Activated T-helper 2 cell treated with anti-CD3 and anti-CD28 coated beads, Interferon-gamma antibody, Interleukin-2, Interleukin-4, amounts not matched to agents 10 μg/mL and 5 μg/mL and 100 μg/mL, durations not matched to agents 14 hours and 24 hours and 36 hours (primary cell): ENCODE measurements at regions of chr15 and their contacts with region 1.

Region 1: DNA sequence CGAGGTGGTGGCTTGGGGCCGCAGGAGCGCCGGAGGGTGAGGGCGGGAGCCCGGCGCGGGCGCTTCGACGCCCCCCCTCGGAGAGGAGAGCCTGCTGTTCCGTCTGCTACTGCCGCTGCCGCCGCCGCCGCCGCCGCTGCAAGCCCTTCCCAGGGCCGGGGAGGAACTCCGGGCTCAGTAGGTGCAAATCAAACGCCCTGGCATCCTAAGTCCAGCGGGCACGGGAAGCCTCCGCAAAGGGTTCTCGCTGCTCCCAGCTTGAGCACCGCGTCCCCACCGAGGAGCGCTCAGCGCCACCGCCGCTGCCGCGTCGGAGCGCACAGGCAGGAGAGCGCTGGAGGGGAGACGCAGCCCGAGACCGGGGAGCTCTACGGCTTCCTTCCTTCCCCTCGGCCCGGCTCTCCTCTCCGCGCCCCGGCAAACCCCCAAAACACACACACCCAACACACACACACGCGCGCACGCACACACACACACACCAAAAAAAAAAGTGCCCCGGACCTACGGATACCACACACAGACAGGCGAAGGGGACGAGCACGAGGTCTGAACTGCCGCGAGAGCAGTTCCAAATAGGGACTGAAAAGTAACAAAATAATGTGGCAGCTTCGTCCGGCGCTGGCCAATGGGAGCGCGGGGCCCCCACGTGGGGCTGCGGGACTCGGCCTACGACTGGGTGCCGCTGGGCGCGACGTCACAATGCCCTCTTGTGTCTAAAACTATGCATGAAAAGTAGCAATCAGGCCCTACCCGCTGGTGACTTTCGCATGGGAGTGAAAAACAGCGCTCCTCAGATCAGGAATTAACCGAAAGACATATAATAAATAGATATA is at the start of gene TLE3:
- DNase-seq: peak; percentile 97
- H3K4me3 Mint-ChIP-seq: peak within 1 kb of the TSS; percentile 99
- H3K27ac Mint-ChIP-seq: peak within 1 kb of the TSS; percentile 97
- H3K4me1 Mint-ChIP-seq: peaks cover 40% of the 10 kb centered on the region
- H3K27me3 Mint-ChIP-seq: peaks cover 18% of the 10 kb centered on the region
- total RNA-seq, gene TLE3: 94.6 and 102 TPM in 2 replicates

Region 2: GRCh38 chr15:69320977-69321554 is 776.5 kb before region 1 on chr15:
- intact Hi-C with region 1: loop called (anchors 2 kb)
- DNase-seq: no peak
- H3K4me3 Mint-ChIP-seq: no peak overlapping the region
- H3K27ac Mint-ChIP-seq: peak overlapping the region; percentile 50
- H3K4me1 Mint-ChIP-seq: peaks cover 21% of the 10 kb centered on the region
- H3K27me3 Mint-ChIP-seq: peaks cover 40% of the 10 kb centered on the region

Region 3: DNA sequence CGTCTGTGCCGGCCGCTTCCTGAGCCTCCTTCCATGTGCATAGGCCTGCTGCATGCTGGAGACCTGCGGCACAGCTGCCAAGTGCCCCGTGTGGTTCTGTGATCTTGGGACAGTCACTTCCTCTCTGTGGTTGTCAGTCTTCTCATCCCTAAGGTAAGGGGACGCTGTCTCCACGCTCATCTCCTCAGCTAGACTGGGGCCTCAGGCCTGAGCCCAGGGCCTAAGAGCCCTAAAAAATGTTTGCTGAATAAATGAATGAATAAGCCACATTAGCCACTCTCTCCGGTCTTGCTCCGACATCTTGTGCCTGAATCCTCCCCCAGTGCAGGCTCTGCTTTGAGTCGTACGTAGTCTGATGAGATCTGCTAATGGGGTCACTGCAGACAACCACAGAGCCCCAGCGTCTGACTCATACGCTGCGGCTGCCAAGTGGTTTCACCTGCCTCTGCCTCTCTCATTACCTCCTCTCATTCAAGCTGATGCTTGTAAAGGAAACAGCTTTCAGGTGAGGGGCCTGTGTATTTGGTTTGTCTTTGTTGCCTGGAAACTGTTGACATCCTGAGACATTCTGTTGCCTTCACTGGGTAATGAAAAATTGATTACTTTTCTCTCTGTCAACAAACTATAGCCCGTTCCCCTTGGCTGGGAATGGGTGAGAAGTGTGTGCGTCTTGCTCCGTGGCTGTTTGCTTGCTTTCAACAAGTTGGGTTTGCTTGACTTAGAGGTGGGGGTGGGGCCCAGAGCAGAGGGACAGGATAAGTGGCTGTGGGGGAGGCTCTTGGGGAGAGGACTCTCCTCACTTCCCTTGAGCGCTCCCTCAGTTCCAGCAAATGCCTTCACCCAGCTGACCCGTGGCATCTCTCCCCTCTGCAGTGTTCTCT is 629.1 kb before region 1 on chr15:
- intact Hi-C with region 1: loop called (anchors 5 kb)
- DNase-seq: peak; percentile 78
- H3K4me3 Mint-ChIP-seq: peak overlapping the region; percentile 5
- H3K27ac Mint-ChIP-seq: peak overlapping the region; percentile 75
- H3K4me1 Mint-ChIP-seq: peaks cover 22% of the 10 kb centered on the region
- H3K27me3 Mint-ChIP-seq: peaks cover 30% of the 10 kb centered on the region

Region 4: GRCh38 chr15:69713726-69714559 is 383.6 kb before region 1 on chr15:
- intact Hi-C with region 1: loop called (anchors 5 kb)
- DNase-seq: peak; percentile 83
- H3K4me3 Mint-ChIP-seq: no peak overlapping the region
- H3K27ac Mint-ChIP-seq: peak overlapping the region; percentile 68
- H3K4me1 Mint-ChIP-seq: peaks cover 59% of the 10 kb centered on the region
- H3K27me3 Mint-ChIP-seq: peaks cover 5% of the 10 kb centered on the region

Region 5: DNA sequence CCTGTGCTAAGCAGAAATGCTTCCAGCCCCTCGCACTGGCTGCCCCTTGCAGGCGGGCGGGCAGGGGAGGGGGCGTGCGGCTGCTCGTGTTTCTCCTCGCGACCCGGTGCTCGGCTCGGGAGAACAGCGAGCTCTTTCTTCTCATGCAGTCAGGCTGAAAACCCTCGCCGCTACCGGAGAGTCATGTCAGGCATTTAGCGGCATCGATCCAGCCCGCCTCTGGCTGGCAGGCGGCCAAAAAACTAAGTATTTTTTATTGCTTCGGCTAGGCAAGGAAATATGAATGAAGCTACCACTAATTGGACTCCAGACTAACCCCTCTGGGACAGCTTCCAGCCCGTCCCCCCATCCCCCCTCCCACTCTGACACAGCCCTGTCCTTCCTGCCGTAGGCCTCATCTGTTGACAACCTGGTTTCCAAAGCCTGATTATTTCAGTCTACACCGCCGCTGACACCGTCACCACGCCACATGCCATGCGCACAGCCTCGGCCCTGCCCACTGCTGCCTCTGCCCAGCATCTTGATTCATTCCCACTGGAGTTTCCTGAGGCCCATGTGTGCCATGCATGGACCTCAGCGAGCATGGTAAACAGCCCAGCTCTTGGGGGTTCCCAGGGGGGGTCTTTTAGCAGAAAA is 35.1 kb before region 1 on chr15:
- intact Hi-C with region 1: no loop called
- DNase-seq: no peak
- H3K4me3 Mint-ChIP-seq: no peak overlapping the region
- H3K27ac Mint-ChIP-seq: no peak overlapping the region
- H3K4me1 Mint-ChIP-seq: no peaks in the 10 kb centered on the region
- H3K27me3 Mint-ChIP-seq: no peaks in the 10 kb centered on the region

Region 6: DNA sequence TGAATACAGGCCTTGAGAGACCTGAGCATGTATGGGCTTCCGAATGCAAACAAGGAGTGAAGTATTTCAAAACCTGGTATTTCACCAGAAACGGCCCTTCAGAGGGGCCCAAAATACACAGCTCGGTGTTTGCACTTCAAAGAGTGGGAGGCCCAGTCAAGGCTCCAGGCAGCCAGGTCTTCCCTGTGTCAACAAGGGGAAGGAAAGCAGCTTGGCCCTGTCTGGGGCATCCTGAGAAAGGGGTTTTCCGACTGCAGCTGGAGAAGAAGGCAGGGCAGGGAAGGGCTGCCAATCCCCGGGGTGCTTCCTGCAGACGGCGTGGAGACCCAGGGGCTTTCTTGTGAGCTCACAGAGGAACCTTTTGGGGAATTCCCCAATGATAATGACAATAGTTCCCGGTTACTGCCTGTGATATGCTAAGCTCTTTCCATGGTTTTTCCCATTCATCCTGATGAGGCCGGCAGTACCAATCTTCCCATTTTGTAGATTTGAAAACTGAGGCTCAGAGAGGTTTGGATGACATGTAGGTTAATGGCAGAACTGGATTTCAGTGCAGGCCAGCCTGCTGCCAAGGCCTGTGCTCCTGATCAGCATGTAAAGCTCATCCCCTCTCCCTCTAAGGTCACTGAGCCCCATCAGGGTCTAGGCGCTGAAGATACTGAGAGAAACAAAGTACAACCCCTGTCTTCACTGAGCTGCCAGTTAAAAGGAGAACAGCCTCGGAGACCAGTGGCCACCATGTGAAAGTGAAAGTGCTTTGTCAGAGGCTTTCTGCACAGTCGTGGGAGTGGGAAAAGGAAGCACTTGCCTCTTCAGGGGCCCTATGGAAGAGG is 43.2 kb after region 1 on chr15:
- intact Hi-C with region 1: loop called (anchors 1 kb)
- DNase-seq: no peak
- H3K4me3 Mint-ChIP-seq: no peak overlapping the region
- H3K27ac Mint-ChIP-seq: peak overlapping the region; percentile 40
- H3K4me1 Mint-ChIP-seq: peaks cover 34% of the 10 kb centered on the region
- H3K27me3 Mint-ChIP-seq: peaks cover 56% of the 10 kb centered on the region